ENCODE measurements at regions of chr6 and their contacts with region 1.

Region 1: GRCh38 chr6:5994234-5994998 is 12.3 kb downstream of the NRN1 start:
- DNase-seq: no peak
- H3K4me3 ChIP-seq: no peak overlapping the region
- H3K4me3 Mint-ChIP-seq: peak overlapping the region in 4 of 7 donors; percentile 8 to 95 (median 44)
- H3K27ac ChIP-seq: no peak overlapping the region
- H3K27ac Mint-ChIP-seq: peak overlapping the region in 1 of 8 donors; percentile 26
- H3K4me1 ChIP-seq: peaks cover 45% of the 10 kb centered on the region
- H3K4me1 Mint-ChIP-seq: peaks cover 35 to 45% (median 43%) of the 10 kb centered on the region in 3 donors
- H3K27me3 ChIP-seq: peaks cover 61% of the 10 kb centered on the region
- H3K27me3 Mint-ChIP-seq: peaks cover 77 to 93% of the 10 kb centered on the region in 2 donors

Region 2: DNA sequence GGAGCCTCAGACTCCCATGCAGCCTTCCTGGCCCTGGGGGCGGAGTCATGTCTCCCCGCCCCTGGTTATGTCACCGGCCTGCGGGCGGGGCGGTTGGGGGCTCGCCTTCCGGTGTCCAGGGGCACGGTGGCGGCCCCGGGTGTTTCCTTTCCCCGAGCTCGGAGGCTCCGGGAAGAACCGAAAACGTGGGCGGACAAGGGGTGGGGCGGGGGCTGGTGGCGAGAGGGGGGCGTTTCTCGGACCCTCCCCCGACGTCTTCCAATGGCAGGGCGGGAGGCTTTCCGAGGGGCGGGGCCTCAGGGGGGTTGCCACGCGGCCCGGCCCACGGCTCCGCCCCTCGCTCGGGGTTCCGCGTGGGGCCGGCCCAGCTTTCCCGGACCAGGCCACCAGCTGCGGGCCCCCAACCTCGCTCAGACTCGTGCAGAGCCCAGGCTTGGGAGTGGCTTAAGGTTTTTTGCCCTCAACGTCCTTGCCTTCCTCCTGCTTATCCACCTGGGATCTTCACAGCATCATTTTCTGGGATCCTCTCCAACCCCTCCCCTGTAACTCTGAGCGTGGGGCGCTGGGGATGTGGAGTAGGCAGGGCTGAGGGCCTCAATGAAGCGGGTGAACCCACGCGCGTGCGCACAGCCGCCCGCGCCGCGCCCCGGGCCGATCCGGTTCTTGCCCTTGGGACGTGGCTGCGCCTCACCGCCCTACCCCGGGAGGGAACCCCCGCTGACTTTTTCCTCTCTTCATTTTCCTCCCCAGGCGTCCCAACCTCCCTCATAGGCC is 14.4 kb after region 1 on chr6:
- CTCF ChIA-PET with region 1: interaction called, 11 read pairs
- POLR2A ChIA-PET with region 1: interaction called, 3 read pairs
- DNase-seq: peak in 1 of 5 donors; percentile 44
- H3K4me3 ChIP-seq: peak overlapping the region; percentile 50
- H3K4me3 Mint-ChIP-seq: peak overlapping the region; percentile 48 to 90 (median 79)
- H3K27ac ChIP-seq: no peak overlapping the region
- H3K27ac Mint-ChIP-seq: peak overlapping the region in 2 of 8 donors; percentile 6 to 74
- H3K4me1 ChIP-seq: peaks cover 40% of the 10 kb centered on the region
- H3K4me1 Mint-ChIP-seq: peaks cover 35 to 55% (median 38%) of the 10 kb centered on the region in 3 donors
- H3K27me3 ChIP-seq: peaks cover 53% of the 10 kb centered on the region
- H3K27me3 Mint-ChIP-seq: peaks cover 55 to 74% of the 10 kb centered on the region in 2 donors